ENCODE measurements at regions of chr1 and their contacts with region 1.

Region 1: DNA sequence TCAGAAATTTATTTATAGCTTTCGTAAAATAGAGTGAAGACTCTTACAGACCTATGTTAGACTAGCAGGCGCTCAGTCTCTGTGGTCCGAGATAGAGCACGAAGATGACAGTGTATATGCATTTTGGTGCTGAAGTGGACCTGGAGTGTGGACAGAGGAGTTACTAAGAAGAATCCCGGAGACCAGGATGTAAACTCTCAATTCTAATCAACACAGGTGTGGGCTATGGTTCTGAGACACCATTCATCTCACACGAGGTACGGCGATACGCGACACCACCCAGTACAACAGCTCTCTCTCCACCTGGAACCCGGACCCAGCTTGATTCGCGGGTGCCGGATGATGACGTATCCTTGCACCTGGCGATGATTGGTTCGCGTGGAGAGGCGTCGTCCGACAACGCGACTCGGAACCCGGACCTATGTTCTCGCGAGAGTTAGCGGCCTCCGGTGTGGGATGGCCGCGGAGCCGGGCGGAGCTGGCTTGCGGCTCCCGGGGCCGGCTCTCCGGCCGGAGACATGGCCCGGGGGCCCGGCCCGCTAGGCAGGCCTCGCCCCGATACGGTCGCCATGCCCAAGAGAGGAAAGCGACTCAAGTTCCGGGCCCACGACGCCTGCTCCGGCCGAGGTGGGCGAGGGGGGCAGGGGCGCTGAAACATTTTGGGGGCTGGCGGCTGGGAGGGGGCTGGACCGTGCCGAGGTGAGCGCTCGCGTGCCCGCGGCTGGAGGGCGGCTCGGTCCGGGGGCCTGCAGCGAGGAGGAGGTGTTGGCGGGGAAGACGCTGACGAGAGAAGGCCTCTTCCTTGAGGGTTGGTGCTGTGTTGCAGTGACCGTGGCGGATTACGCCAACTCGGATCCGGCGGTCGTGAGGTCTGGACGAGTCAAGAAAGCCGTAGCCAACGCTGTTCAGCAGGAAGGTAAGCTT is at the start of gene TMEM183A:
- DNase-seq: peak; percentile 98
- ATAC-seq: peak; percentile 100
- H3K4me3 ChIP-seq: peak within 1 kb of the TSS; percentile 91 to 94
- H3K27ac ChIP-seq: peak within 1 kb of the TSS; percentile 74 to 95
- H3K4me1 ChIP-seq: no peaks in the 10 kb centered on the region
- H3K27me3 ChIP-seq: no peaks in the 10 kb centered on the region
- total RNA-seq, gene TMEM183A: 43.9 to 47.7 TPM

Region 2: DNA sequence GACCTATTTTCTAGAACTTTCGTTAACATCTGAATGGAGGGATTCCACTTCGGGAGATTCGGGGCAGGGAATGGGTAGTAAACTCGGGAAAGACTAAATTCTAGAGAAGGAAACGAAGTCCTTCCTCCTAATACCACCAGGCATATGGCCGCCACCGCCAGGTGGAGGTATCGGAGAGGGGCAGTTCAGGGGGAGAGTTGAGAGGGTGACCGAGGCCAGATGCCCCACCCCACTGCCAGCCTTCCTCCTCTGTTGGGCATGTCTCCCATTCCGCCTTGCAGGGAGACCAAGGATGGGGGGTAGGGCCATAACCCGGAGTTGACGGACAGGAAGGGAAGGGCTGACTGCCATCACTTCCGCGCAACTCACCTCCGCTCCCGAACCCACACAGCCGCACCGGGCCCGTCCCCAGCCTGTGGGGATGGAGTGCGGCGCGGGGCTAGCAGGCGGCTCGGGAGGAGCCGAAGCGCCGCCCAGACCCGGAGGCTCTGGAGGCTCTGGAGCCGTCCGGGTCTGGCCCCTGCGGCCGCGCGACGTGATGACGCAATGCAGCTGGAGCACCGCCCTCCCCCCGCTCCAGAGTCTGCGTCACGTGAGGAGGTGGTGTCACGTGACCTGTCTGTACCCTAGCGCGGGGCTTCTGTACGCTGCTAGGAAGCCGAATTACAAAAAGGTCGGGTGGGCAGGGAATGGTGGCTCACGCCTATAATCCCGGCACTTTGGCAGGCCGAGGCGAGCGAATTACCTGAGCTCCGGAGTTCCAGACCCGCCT is 80.3 kb before region 1 on chr1 and contains the start of gene KLHL12:
- intact Hi-C with region 1: loop called (anchors 2 to 5 kb)
- DNase-seq: peak; percentile 98 to 99
- ATAC-seq: peak; percentile 100
- H3K4me3 ChIP-seq: peak within 1 kb of the TSS; percentile 50 to 61
- H3K27ac ChIP-seq: peak within 1 kb of the TSS; percentile 31 to 53
- H3K4me1 ChIP-seq: no peaks in the 10 kb centered on the region
- H3K27me3 ChIP-seq: no peaks in the 10 kb centered on the region
- total RNA-seq, gene KLHL12: 15.9 to 17.9 TPM

Region 3: DNA sequence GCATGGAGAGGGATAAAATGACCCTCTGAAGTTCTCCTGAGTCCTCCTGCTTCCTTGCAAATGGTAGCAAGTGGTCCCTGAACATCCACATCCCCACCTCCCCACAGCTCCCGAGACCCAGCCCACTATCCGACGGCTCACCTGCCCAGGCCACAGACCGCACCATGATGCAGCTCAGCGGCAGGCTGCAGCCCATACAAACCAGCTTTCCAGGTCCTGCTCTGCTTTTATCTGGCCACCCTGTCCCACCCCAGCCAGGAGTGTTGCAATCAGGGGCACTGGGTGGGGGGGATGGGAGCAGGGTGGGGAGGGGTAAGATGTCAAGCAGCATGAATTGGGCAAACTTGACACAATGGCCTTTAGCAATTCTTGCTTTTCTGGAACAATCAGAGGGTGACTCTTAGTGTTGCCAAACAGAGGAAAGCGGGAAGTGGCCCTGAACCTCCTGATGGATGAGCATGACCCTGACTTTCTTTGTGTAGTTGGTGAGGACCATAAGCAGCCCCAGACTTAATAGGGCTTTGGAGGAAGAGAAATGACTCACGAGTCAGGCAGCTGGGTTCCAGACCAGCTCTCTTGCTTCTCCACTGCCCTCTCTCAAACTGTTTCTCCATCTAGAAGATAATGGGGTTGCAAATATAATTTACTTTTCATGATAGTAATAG is 222.4 kb after region 1 on chr1 and contains the start of gene CHIT1:
- intact Hi-C with region 1: no loop called
- DNase-seq: no peak
- ATAC-seq: no peak
- H3K4me3 ChIP-seq: no peak within 1 kb of the TSS
- H3K27ac ChIP-seq: no peak within 1 kb of the TSS
- H3K4me1 ChIP-seq: no peaks in the 10 kb centered on the region
- H3K27me3 ChIP-seq: no peaks in the 10 kb centered on the region
- total RNA-seq, gene CHIT1: 1.3 to 2.2 TPM

Measured in aorta (tissue), 5 donors.